Activated CD4-positive, alpha-beta T cell treated with anti-CD3 and anti-CD28 coated beads for 36 hours (primary cell): ENCODE measurements at regions of chr6 and their contacts with region 1.

Region 1: DNA sequence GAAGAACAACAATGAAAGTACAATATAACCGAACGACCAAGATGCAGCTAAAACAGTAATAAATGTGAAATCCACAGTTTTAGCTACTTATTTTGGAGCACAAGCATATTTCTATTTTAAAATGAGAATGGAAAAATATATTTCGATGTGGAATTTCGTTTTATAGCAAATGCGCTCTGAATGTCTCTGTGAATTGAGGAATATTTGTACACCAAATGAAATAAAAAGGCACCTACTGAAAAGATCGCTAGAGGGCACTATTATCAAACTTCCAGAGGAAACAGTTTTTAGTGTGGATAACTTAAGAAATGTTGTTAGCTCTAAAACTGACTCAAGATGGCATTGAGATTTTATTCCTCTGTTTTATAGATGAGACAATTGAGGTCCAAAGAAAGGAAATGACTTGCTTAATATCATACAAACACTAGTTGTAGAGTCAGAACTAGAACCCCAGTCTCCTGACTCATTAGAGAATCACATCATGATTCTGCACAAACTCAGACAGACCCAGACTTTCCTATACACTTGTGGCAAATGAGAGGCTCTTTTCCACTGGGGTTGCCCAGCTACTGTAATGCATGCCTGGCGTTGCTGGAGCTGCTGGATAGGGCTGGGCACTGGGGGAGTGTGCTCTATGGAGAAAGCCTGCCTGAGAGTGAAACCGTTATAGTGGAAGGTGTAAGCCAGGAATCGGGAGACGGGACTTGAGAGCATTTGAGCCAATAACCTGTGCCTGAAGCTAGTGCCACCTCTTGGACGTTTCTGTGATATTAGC is 51.9 kb downstream of the GCLC start:
- DNase-seq: peak; percentile 72
- ATAC-seq: peak; percentile 96
- H3K4me3 Mint-ChIP-seq: no peak overlapping the region
- H3K27ac Mint-ChIP-seq: no peak overlapping the region
- H3K4me1 Mint-ChIP-seq: peaks cover 24% of the 10 kb centered on the region
- H3K27me3 Mint-ChIP-seq: peaks cover 16% of the 10 kb centered on the region

Region 2: DNA sequence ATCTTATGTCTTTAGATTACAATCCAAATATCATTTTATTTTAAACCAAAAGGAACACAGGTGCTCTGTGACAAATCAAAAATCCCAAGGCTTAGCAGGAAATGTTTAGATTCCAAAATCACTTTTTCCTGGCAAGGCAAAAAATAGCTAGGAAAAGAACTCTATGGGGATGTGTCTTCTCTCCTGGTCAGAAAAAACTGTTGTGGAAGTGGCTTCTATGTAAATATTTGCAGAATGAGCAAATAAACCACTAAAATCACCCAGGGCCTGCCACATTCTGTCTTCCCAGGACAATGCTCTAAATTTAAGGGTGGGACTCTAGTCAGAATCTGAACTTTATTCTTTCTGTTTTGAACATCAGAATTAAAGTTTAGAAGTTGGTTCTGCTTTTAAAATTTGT is 373.7 kb before region 1 on chr6:
- CTCF ChIA-PET with region 1: no interaction called
- POLR2A ChIA-PET with region 1: no interaction called
- intact Hi-C with region 1: no loop called
- DNase-seq: no peak
- ATAC-seq: no peak
- H3K4me3 Mint-ChIP-seq: no peak overlapping the region
- H3K27ac Mint-ChIP-seq: no peak overlapping the region
- H3K4me1 Mint-ChIP-seq: no peaks in the 10 kb centered on the region
- H3K27me3 Mint-ChIP-seq: peaks cover 5% of the 10 kb centered on the region

Region 3: DNA sequence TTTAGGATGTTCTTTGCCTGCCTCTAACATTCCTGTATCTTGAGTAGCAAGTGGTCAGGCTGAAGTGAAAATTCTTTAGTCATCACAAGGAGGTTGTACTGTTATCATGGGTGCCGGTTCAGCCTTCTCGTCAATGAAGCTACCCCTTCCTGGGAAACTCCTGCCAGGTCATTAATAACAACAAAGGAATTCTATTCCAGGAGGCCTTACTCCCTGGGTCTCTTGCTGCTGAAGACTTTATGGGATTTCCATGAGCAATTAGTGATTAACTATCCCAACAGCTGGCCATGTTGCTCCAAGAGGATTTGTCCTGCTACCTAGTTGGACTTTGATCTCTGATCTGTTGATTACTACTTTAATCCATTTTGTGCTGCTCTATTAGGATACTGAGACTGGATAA is 81.6 kb before region 1 on chr6:
- CTCF ChIA-PET with region 1: no interaction called
- POLR2A ChIA-PET with region 1: no interaction called
- intact Hi-C with region 1: no loop called
- DNase-seq: no peak
- ATAC-seq: no peak
- H3K4me3 Mint-ChIP-seq: no peak overlapping the region
- H3K27ac Mint-ChIP-seq: no peak overlapping the region
- H3K4me1 Mint-ChIP-seq: no peaks in the 10 kb centered on the region
- H3K27me3 Mint-ChIP-seq: no peaks in the 10 kb centered on the region

Region 4: GRCh38 chr6:53426667-53427270 is 66.3 kb before region 1 on chr6:
- CTCF ChIA-PET with region 1: interaction called, 3 read pairs
- POLR2A ChIA-PET with region 1: no interaction called
- intact Hi-C with region 1: loop called in 1 of 2 experiments (anchors 2 kb)
- DNase-seq: no peak
- ATAC-seq: peak; percentile 96
- H3K4me3 Mint-ChIP-seq: no peak overlapping the region
- H3K27ac Mint-ChIP-seq: peak overlapping the region; percentile 26
- H3K4me1 Mint-ChIP-seq: peaks cover 23% of the 10 kb centered on the region
- H3K27me3 Mint-ChIP-seq: peaks cover 11% of the 10 kb centered on the region

Region 5: GRCh38 chr6:53593001-53593488 is 100.0 kb after region 1 on chr6:
- CTCF ChIA-PET with region 1: interaction called, 3 read pairs
- POLR2A ChIA-PET with region 1: no interaction called
- intact Hi-C with region 1: loop called in 1 of 2 experiments (anchors 5 kb)
- DNase-seq: no peak
- ATAC-seq: no peak
- H3K4me3 Mint-ChIP-seq: no peak overlapping the region
- H3K27ac Mint-ChIP-seq: no peak overlapping the region
- H3K4me1 Mint-ChIP-seq: peaks cover 11% of the 10 kb centered on the region
- H3K27me3 Mint-ChIP-seq: peaks cover 5% of the 10 kb centered on the region

Region 6: GRCh38 chr6:53718597-53719460 is 225.8 kb after region 1 on chr6:
- CTCF ChIA-PET with region 1: interaction called, 148 read pairs
- POLR2A ChIA-PET with region 1: no interaction called
- intact Hi-C with region 1: no loop called
- DNase-seq: peak; percentile 45
- ATAC-seq: peak; percentile 83
- H3K4me3 Mint-ChIP-seq: no peak overlapping the region
- H3K27ac Mint-ChIP-seq: no peak overlapping the region
- H3K4me1 Mint-ChIP-seq: peaks cover 5% of the 10 kb centered on the region
- H3K27me3 Mint-ChIP-seq: peaks cover 18% of the 10 kb centered on the region

Region 7: GRCh38 chr6:53956068-53956711 is 463.1 kb after region 1 on chr6:
- CTCF ChIA-PET with region 1: interaction called, 3 read pairs
- POLR2A ChIA-PET with region 1: no interaction called
- intact Hi-C with region 1: loop called in 1 of 2 experiments (anchors 10 kb)
- DNase-seq: peak; percentile 64
- ATAC-seq: peak; percentile 72
- H3K4me3 Mint-ChIP-seq: no peak overlapping the region
- H3K27ac Mint-ChIP-seq: no peak overlapping the region
- H3K4me1 Mint-ChIP-seq: no peaks in the 10 kb centered on the region
- H3K27me3 Mint-ChIP-seq: no peaks in the 10 kb centered on the region